Right ventricle myocardium superior (tissue), 1 donor: ENCODE measurements at regions of chr20 and their contacts with region 1.

Region 1: GRCh38 chr20:8853805-8854338 is 215.0 kb upstream of the PLCB4 start:
- DNase-seq: no peak
- ATAC-seq: peak; percentile 87

Region 2: DNA sequence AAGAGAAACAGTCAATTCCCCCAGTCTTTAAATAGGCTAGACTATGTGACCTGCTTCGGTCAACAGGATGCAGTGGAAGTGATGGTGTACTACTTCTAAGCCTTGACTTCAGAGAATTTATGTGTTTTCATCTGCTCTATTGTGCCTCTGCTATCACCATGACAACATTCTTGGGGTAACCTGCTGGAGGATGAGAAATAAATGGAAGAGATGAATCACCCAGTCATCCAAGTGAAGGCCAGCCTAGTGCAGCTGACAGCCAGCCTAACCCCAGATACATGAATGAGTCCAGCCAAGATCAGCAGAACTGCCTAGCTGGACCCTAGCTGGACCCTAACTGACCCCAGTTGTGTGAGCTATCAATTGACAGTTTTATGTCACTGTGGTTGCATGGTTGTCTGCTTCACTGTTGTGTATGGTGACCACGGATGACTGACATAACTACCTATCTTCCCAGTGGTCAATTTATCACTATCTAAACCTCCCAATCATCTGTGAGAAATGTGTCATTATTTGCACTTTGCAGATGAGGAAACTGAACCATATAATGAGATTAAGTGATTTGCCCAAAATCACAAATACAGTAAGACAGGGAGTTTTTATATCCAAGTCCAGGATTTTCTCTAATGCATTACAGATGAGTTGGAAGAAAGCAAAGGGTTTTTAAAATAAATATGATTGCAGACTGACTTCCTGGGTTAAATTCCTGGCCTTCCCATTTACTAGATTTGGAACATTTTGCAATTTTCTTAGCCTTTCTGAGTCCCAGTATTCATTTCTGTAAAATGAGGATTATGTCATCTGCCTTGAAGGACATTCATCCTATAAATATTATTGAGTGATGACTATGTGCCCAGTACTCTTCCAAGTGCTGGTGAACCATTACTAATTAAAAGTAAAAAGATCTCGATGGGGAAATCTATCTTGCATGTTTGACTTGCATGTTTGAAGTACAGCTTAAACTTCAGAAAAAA is 78.6 kb after region 1 on chr20:
- intact Hi-C with region 1: loop called (anchors 10 kb)
- DNase-seq: no peak
- ATAC-seq: peak; percentile 52

Region 3: GRCh38 chr20:8981482-8981881 is 127.6 kb after region 1 on chr20:
- intact Hi-C with region 1: loop called (anchors 10 kb)
- DNase-seq: no peak
- ATAC-seq: peak; percentile 60

Region 4: DNA sequence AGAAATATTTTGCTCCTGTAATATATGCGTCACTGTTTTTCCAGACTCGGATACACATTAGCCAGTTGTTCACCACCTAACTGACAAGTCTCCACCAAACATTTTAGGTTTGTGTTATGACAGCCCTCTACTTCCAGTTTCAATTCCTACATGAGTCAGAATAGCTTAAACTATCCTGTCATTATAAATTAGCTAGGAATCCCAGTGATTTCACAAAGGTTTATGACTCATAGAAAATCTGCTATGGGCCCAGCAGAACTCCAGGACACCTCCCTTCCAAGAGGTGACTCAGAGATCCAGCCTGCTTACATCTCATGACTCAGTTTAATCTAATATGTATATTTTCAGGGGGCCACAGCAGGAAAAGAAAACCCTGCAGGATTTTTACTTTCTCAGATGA is 197.6 kb after region 1 on chr20:
- intact Hi-C with region 1: loop called (anchors 10 kb)
- DNase-seq: no peak
- ATAC-seq: no peak

Region 5: GRCh38 chr20:9359561-9360308 is 505.9 kb after region 1 on chr20:
- intact Hi-C with region 1: loop called (anchors 5 kb)
- DNase-seq: peak; percentile 50
- ATAC-seq: peak; percentile 80